MCF 10A (cell line): ENCODE measurements at regions of chr1 and their contacts with region 1.

Region 1: GRCh38 chr1:179206812-179207211 is 22.7 kb downstream of the ABL2 start:
- DNase-seq: no peak
- H3K4me3 Mint-ChIP-seq: no peak overlapping the region
- H3K27ac Mint-ChIP-seq: no peak overlapping the region
- H3K4me1 Mint-ChIP-seq: peaks cover 16% of the 10 kb centered on the region
- H3K27me3 Mint-ChIP-seq: no peaks in the 10 kb centered on the region
- CTCF ChIP-seq: no peak

Region 2: GRCh38 chr1:179217943-179218507 is 11.2 kb after region 1 on chr1:
- CTCF ChIA-PET with region 1: interaction called, 10 read pairs
- POLR2A ChIA-PET with region 1: interaction called, 10 read pairs
- intact Hi-C with region 1: no loop called
- DNase-seq: peak; percentile 56
- H3K4me3 Mint-ChIP-seq: no peak overlapping the region
- H3K27ac Mint-ChIP-seq: peak overlapping the region; percentile 93
- H3K4me1 Mint-ChIP-seq: peaks cover 19% of the 10 kb centered on the region
- H3K27me3 Mint-ChIP-seq: no peaks in the 10 kb centered on the region
- CTCF ChIP-seq: no peak